ENCODE measurements at regions of chr11 and their contacts with region 1.

Region 1: GRCh38 chr11:125923012-125923579 is 18.8 kb downstream of the DDX25 start:
- DNase-seq: peak; percentile 75 to 79
- H3K4me3 ChIP-seq: no peak overlapping the region
- H3K27ac ChIP-seq: no peak overlapping the region
- H3K4me1 ChIP-seq: no peaks in the 10 kb centered on the region
- H3K27me3 ChIP-seq: no peaks in the 10 kb centered on the region
- CTCF ChIP-seq: peak; percentile 79 to 87 (median 82)
- POLR2A ChIP-seq: no peak

Region 2: GRCh38 chr11:126194121-126194543 is 271.0 kb after region 1 on chr11:
- intact Hi-C with region 1: loop called (anchors 5 kb)
- DNase-seq: peak; percentile 56 to 64
- H3K4me3 ChIP-seq: no peak overlapping the region
- H3K27ac ChIP-seq: peak overlapping the region; percentile 23 to 51
- H3K4me1 ChIP-seq: no peaks in the 10 kb centered on the region
- H3K27me3 ChIP-seq: no peaks in the 10 kb centered on the region
- CTCF ChIP-seq: peak; percentile 71 to 85 (median 81)
- POLR2A ChIP-seq: no peak